CD4-positive, alpha-beta T cell (primary cell): ENCODE measurements at regions of chr10 and their contacts with region 1.

Region 1: GRCh38 chr10:101214446-101215396 is 14.5 kb downstream of the LBX1 start:
- DNase-seq: peak; percentile 61 to 87 (median 70)
- ATAC-seq: peak; percentile 73
- H3K4me3 ChIP-seq: no peak overlapping the region
- H3K4me3 Mint-ChIP-seq: peak overlapping the region; percentile 60
- H3K27ac ChIP-seq: no peak overlapping the region
- H3K27ac Mint-ChIP-seq: no peak overlapping the region
- H3K4me1 ChIP-seq: peaks cover 53% of the 10 kb centered on the region
- H3K4me1 Mint-ChIP-seq: peaks cover 33% of the 10 kb centered on the region
- H3K27me3 ChIP-seq: peaks cover 84 to 90% of the 10 kb centered on the region in 2 experiments
- H3K27me3 Mint-ChIP-seq: peaks cover 98% of the 10 kb centered on the region
- CTCF ChIP-seq: peak; percentile 88

Region 2: GRCh38 chr10:101091546-101092481 is 122.9 kb before region 1 on chr10:
- CTCF ChIA-PET with region 1: no interaction called
- POLR2A ChIA-PET with region 1: no interaction called
- intact Hi-C with region 1: no loop called
- DNase-seq: no peak
- ATAC-seq: no peak
- H3K4me3 ChIP-seq: no peak overlapping the region
- H3K4me3 Mint-ChIP-seq: no peak overlapping the region
- H3K27ac ChIP-seq: no peak overlapping the region
- H3K27ac Mint-ChIP-seq: no peak overlapping the region
- H3K4me1 ChIP-seq: peaks cover 6% of the 10 kb centered on the region
- H3K4me1 Mint-ChIP-seq: no peaks in the 10 kb centered on the region
- H3K27me3 ChIP-seq: peaks cover 34 to 37% of the 10 kb centered on the region in 2 experiments
- H3K27me3 Mint-ChIP-seq: peaks cover 85% of the 10 kb centered on the region
- CTCF ChIP-seq: no peak

Region 3: DNA sequence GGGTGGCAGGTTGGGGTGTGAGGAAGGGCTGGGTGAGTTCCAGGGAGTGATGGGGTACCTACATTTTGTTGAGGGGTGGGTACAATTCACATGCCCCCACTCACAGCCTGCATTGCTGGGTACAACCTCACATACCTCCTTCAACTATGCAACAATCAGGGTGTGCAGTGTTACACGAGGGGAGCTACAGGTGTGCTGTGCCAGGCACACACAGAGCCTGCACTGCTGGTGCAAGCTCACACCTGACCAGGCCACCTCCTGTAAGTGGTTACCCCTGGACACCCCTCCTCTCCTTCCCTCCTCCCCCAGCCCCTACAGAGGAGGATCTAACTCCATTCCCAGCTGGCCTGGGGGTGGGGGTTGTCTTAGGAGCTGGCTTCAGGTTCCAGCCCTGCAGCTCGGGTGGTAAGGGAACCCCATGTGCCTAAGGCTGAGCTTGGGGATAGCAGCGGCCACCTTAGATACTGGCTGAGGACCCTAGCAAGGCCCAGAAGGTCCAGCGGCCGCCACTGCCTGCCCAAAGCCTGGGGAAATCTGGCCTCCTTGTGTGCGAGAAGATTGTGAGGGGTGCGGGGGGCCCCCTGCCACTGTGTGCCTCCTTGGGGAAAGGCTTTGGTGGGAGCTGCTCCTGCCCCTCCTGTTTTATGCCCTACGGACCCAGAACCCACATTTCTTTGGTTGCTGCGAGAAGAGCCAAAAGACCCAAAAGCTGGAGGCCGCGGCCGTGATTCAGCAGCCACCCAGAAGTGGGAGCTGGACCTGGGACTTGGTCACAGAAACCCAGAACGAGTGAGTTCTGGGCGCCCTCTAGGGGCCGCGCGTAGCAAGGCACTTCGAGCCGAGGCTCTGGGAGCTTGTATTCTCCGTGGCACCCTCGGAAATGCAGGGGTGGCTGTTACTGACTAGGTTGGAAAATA is 72.8 kb before region 1 on chr10:
- CTCF ChIA-PET with region 1: no interaction called
- POLR2A ChIA-PET with region 1: no interaction called
- intact Hi-C with region 1: no loop called
- DNase-seq: peak; percentile 60 to 89 (median 77)
- ATAC-seq: peak; percentile 87
- H3K4me3 ChIP-seq: no peak overlapping the region
- H3K4me3 Mint-ChIP-seq: no peak overlapping the region
- H3K27ac ChIP-seq: no peak overlapping the region
- H3K27ac Mint-ChIP-seq: no peak overlapping the region
- H3K4me1 ChIP-seq: peaks cover 43% of the 10 kb centered on the region
- H3K4me1 Mint-ChIP-seq: peaks cover 22% of the 10 kb centered on the region
- H3K27me3 ChIP-seq: peaks cover 89 to 99% of the 10 kb centered on the region in 2 experiments
- H3K27me3 Mint-ChIP-seq: peaks cover 93% of the 10 kb centered on the region
- CTCF ChIP-seq: peak; percentile 98

Region 4: DNA sequence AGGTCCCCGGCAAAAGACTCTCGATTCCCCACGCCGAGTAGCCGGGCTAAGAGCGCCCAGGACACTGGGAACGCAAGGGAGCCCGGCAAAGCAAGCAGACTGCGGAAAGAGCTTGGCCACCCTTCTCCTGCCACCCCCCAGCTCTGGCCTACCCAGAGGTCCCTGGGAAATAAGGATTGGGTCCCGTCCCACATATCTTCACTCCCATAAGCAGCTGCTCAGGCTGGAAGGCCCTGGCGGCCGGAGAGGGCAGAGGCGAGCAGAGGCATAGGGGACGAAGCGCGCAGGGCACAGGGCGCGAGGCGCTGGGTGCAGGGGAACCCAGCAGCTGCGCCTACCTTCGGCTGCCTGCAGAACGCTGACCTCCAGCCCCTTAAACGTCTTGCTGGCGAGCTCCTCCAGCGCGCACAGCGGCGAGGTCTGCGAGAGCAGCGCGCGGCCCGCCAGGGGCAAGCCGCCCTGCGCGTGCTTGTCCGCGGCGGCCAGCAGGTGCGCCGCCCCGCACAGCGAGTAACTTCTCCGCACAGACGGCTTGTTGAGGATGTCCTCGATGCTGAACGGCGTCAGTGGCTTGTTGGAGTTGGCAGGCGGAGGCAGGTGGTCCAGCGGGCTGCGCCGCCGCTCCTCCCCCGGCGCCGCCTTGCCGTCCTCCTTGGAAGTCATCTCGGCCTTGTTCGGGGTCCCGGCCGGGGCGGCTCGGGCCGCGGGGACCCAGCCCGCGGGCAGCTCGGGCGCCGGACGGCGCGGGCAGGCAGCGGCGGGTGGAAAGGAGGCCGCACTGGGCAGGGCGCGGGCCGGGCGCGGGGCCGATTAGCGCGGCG is 13.6 kb after region 1 on chr10:
- CTCF ChIA-PET with region 1: interaction called, 12 read pairs
- POLR2A ChIA-PET with region 1: interaction called, 5 read pairs
- intact Hi-C with region 1: no loop called
- DNase-seq: peak in 1 of 14 experiments; percentile 37
- ATAC-seq: no peak
- H3K4me3 ChIP-seq: no peak overlapping the region
- H3K4me3 Mint-ChIP-seq: peak overlapping the region; percentile 79
- H3K27ac ChIP-seq: no peak overlapping the region
- H3K27ac Mint-ChIP-seq: no peak overlapping the region
- H3K4me1 ChIP-seq: peaks cover 63% of the 10 kb centered on the region
- H3K4me1 Mint-ChIP-seq: peaks cover 49% of the 10 kb centered on the region
- H3K27me3 ChIP-seq: peaks cover 80 to 97% of the 10 kb centered on the region in 2 experiments
- H3K27me3 Mint-ChIP-seq: peaks cover 85% of the 10 kb centered on the region
- CTCF ChIP-seq: no peak

Region 5: GRCh38 chr10:101272229-101272868 is 57.6 kb after region 1 on chr10:
- CTCF ChIA-PET with region 1: interaction called, 11 read pairs
- POLR2A ChIA-PET with region 1: no interaction called
- intact Hi-C with region 1: no loop called
- DNase-seq: peak; percentile 28 to 73 (median 50)
- ATAC-seq: peak; percentile 90
- H3K4me3 ChIP-seq: no peak overlapping the region
- H3K4me3 Mint-ChIP-seq: no peak overlapping the region
- H3K27ac ChIP-seq: no peak overlapping the region
- H3K27ac Mint-ChIP-seq: no peak overlapping the region
- H3K4me1 ChIP-seq: peaks cover 2% of the 10 kb centered on the region
- H3K4me1 Mint-ChIP-seq: no peaks in the 10 kb centered on the region
- H3K27me3 ChIP-seq: peaks cover 3 to 7% of the 10 kb centered on the region in 2 experiments
- H3K27me3 Mint-ChIP-seq: peaks cover 42% of the 10 kb centered on the region
- CTCF ChIP-seq: peak; percentile 70

Region 6: GRCh38 chr10:101441541-101442455 is 227.1 kb after region 1 on chr10:
- CTCF ChIA-PET with region 1: interaction called, 4 read pairs
- POLR2A ChIA-PET with region 1: no interaction called
- intact Hi-C with region 1: loop called (anchors 1 to 2 kb)
- DNase-seq: peak in 6 of 14 experiments; percentile 3 to 63 (median 28)
- ATAC-seq: peak; percentile 98
- H3K4me3 ChIP-seq: no peak overlapping the region
- H3K4me3 Mint-ChIP-seq: no peak overlapping the region
- H3K27ac ChIP-seq: no peak overlapping the region
- H3K27ac Mint-ChIP-seq: no peak overlapping the region
- H3K4me1 ChIP-seq: no peaks in the 10 kb centered on the region
- H3K4me1 Mint-ChIP-seq: peaks cover 10% of the 10 kb centered on the region
- H3K27me3 ChIP-seq: no peaks in the 10 kb centered on the region
- H3K27me3 Mint-ChIP-seq: no peaks in the 10 kb centered on the region
- CTCF ChIP-seq: peak; percentile 31

Region 7: DNA sequence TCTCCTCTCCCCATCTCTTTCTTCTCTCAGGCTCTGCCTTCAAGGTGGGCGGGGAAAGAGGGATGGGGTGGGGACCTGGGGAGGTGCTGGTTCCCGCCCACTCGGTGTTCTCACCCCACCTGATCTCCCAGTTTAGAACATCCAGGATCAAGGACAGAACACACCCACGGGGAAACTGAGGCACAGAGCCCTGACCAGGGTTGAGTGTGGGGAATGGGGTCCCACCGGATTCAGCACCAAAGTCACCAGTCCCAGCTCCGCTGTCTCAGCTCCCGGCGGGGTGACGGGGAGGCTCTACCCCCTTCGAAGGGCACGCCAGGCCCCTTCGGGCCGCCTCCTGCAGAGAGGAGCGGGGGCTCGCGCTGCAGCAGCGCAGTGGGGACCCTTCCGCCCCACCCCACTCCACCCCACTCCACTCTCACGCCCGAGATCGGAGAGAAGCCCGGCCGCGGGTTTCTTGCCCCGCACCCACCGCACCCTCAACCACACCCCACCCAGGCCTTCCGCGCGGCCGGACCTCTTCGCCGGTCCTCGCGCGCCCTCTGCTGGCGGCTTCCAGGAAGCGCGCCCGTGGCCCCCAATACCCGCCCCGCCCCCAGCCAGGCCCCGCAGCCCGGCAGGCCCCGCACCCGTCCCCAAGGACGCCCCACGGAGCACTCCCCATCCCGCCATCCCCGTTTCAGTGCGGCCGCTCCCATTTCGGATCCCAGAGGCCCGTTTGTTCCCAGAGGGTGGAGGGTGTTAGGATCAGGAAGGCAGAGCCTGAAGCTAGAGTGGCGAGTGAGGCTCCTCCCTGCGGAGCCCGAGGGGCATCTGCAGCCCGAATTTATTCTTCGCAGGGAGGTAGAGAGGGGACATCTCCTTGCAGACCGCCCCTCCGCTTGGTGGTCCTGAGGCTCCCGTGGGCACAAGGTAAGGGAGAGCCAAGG is 355.4 kb after region 1 on chr10:
- CTCF ChIA-PET with region 1: interaction called, 16 read pairs
- POLR2A ChIA-PET with region 1: no interaction called
- intact Hi-C with region 1: loop called (anchors 1 kb)
- DNase-seq: peak; percentile 65 to 90 (median 76)
- ATAC-seq: peak; percentile 92
- H3K4me3 ChIP-seq: peak overlapping the region; percentile 61
- H3K4me3 Mint-ChIP-seq: peak overlapping the region; percentile 77
- H3K27ac ChIP-seq: no peak overlapping the region
- H3K27ac Mint-ChIP-seq: no peak overlapping the region
- H3K4me1 ChIP-seq: peaks cover 28% of the 10 kb centered on the region
- H3K4me1 Mint-ChIP-seq: no peaks in the 10 kb centered on the region
- H3K27me3 ChIP-seq: peaks cover 38 to 46% of the 10 kb centered on the region in 2 experiments
- H3K27me3 Mint-ChIP-seq: peaks cover 46% of the 10 kb centered on the region
- CTCF ChIP-seq: peak; percentile 93

Region 8: DNA sequence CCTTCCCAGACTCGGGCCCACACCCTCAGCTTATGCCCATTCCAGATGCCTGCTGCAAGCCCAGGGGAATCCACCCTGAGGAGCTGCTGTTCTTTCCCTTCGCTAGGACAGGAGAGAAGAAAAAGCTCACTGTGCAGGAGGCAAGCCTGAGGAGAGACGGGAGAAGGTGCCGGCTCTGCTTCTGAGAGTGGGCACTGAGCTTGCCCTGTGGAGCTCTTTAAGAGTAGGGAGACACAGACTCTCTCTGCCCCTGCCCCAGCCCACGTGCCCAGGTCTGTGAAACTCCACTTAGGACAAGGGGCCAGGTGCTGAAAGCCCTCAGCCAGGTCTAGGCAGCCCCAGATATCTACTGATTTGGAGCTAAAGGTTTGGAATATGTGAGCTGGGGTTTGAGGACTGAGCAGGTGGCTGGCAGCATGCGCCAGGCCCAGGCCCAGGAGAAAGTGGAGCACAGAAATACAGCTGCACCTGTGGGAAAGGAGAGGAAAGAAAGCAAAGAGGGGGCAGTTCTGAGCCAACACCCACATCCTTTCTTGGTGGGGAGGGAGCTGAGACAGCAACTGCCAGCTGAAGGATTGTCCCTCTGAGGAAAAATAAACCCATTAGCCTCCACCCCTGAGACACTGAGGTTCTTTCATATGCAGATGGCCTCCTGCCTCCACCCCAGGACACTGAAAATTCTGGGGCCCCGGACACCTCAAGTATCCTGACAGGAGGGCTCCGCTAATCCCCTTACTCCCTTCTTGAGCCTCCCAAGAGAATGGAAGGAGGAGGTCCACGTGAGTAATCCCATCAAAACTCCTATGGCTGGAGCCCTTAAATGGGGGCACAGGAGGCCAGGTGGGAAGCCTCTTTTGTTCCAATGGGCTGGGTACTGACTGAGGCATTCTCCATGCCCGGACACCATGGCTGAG is 366.0 kb after region 1 on chr10:
- CTCF ChIA-PET with region 1: no interaction called
- POLR2A ChIA-PET with region 1: no interaction called
- intact Hi-C with region 1: no loop called
- DNase-seq: no peak
- ATAC-seq: no peak
- H3K4me3 ChIP-seq: no peak overlapping the region
- H3K4me3 Mint-ChIP-seq: no peak overlapping the region
- H3K27ac ChIP-seq: no peak overlapping the region
- H3K27ac Mint-ChIP-seq: no peak overlapping the region
- H3K4me1 ChIP-seq: peaks cover 2% of the 10 kb centered on the region
- H3K4me1 Mint-ChIP-seq: no peaks in the 10 kb centered on the region
- H3K27me3 ChIP-seq: no peaks in the 10 kb centered on the region
- H3K27me3 Mint-ChIP-seq: no peaks in the 10 kb centered on the region
- CTCF ChIP-seq: no peak